ENCODE measurements at regions of chr18 and their contacts with region 1.

Region 1: GRCh38 chr18:8757396-8757997 is 52.1 kb downstream of the MTCL1 start:
- DNase-seq: no peak
- ATAC-seq: no peak
- H3K4me3 ChIP-seq: no peak overlapping the region
- H3K27ac ChIP-seq: no peak overlapping the region
- H3K4me1 ChIP-seq: peaks cover 11% of the 10 kb centered on the region
- H3K27me3 ChIP-seq: no peaks in the 10 kb centered on the region
- CTCF ChIP-seq: no peak

Region 2: GRCh38 chr18:8844721-8845148 is 87.2 kb after region 1 on chr18:
- CTCF ChIA-PET with region 1: no interaction called
- POLR2A ChIA-PET with region 1: interaction called, 12 read pairs
- intact Hi-C with region 1: no loop called
- DNase-seq: peak; percentile 77
- ATAC-seq: peak; percentile 71
- H3K4me3 ChIP-seq: no peak overlapping the region
- H3K27ac ChIP-seq: peak overlapping the region; percentile 76
- H3K4me1 ChIP-seq: peaks cover 13% of the 10 kb centered on the region
- H3K27me3 ChIP-seq: no peaks in the 10 kb centered on the region
- CTCF ChIP-seq: no peak

Measured in PC-3 (cell line).